ENCODE measurements at regions of chr18 and their contacts with region 1.

Region 1: DNA sequence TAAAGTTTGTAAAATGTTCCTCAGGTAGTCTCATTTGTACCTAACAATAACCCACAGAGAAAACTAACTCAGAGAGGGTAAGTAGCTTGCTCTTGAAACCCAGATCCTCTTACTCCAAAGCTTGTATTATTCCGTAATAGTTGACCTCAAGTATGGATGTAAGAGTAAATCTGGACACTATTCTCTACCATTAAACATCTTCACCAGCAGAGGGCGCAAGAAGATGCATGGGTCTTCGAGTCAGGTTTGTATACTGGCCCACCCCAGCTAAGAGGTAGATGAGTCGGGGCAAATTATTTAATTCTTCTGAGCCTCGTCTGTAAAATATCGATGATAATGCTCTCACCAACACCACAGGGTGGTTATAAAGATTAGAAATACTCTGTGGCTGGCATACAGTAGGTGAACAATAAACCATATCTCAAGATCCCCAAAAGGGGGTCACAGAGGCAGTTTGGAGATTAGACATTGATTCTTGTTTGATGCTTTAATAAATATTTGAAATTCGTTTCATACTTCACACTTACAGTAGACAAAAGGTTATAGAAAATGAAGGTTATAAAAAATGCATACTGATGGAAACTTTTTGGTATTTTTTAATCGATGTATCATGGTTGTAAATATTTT is 3.5 kb upstream of the CABLES1 start:
- DNase-seq: peak; percentile 76
- CTCF ChIP-seq: peak; percentile 68

Region 2: GRCh38 chr18:23121133-23121532 is 10.7 kb before region 1 on chr18:
- CTCF ChIA-PET with region 1: interaction called, 17 read pairs
- POLR2A ChIA-PET with region 1: no interaction called
- DNase-seq: no peak
- CTCF ChIP-seq: no peak

Region 3: GRCh38 chr18:23356915-23357601 is 225.3 kb after region 1 on chr18:
- CTCF ChIA-PET with region 1: interaction called, 36 read pairs
- POLR2A ChIA-PET with region 1: no interaction called
- DNase-seq: no peak
- CTCF ChIP-seq: no peak

Region 4: DNA sequence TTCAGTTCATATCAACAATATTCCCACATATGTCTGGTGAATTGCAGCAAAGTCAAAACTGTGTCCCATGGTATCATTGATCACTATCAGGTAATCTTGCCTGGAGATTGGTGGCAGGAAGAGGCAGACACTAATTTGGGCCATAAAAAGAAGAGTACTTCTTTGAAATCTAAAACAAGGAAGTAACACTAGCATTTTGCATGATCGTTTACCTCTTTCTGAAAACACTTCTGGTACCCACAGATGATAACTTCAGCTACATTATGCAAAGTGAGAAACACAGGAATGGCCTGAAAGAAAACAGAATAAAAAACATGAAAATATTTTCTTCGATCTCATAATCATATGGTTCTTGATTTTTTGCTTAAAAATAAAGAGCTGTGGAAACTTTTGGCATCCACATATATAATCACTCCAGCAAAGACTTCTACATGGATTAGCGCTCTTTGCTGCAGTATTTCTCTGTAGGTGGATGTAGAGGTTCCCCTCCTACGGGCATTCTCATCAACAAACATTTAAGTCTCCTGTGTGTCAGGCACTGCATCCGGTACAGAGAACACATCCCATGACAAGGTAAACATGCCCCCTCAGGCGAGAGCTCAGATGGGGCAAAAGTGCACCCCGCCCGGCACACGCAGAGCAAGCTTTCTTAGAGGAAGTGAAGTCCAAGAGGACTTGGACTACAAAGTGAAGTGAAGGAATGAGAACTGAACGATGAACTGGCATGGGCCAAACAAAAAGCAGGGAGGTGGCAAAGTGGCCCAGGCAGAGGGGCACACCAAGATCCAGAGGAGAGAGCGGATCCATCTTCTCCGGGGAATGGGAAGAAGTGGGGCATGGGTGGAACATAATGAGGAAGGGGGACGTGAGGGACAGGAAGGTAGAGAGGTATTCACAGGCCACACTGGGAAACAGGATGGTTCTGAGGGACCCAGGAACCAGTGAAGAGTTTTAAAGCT is 253.3 kb after region 1 on chr18:
- CTCF ChIA-PET with region 1: interaction called, 30 read pairs
- POLR2A ChIA-PET with region 1: no interaction called
- DNase-seq: peak; percentile 32
- CTCF ChIP-seq: no peak

Region 5: GRCh38 chr18:23412351-23412964 is 280.7 kb after region 1 on chr18:
- CTCF ChIA-PET with region 1: interaction called, 43 read pairs
- POLR2A ChIA-PET with region 1: no interaction called
- DNase-seq: no peak
- CTCF ChIP-seq: no peak